ENCODE measurements at regions of chr2 and their contacts with region 1.

Region 1: GRCh38 chr2:8872821-8873432 is 35.5 kb upstream of the KIDINS220 start:
- DNase-seq: peak; percentile 73
- ATAC-seq: peak; percentile 54
- H3K4me3 ChIP-seq: no peak overlapping the region
- H3K27ac ChIP-seq: no peak overlapping the region
- H3K4me1 ChIP-seq: peaks cover 2% of the 10 kb centered on the region; the same call in 1 of the 2 replicates
- H3K27me3 ChIP-seq: no peaks in the 10 kb centered on the region
- CTCF ChIP-seq: peak; percentile 71
- POLR2A ChIP-seq: no peak
- RAD21 ChIP-seq: peak; percentile 74

Region 2: DNA sequence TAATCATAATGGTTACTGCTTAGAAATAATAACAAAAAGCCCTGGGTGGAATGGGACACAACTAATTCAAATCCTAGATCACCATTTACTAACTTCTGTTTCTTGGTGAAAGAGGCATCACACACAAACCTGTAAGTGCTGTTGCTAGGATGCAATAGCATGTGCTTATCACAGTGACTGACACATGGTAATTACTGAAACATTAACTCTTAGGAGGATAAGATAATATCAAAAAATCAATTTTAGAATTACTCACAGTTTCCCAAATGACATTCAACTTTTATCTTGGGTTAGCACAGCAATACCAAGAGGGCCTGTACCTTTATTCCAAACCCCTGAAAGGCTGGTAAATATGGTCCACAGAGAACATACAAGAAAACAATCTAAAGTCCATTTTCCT is 61.4 kb after region 1 on chr2:
- CTCF ChIA-PET with region 1: no interaction called
- POLR2A ChIA-PET with region 1: no interaction called
- dilution Hi-C with region 1: no loop called
- in situ Hi-C with region 1: no loop called
- intact Hi-C with region 1: no loop called
- DNase-seq: no peak
- ATAC-seq: no peak
- H3K4me3 ChIP-seq: no peak overlapping the region
- H3K27ac ChIP-seq: no peak overlapping the region
- H3K4me1 ChIP-seq: 0 out of 2 replicates have a peak, but pooled peaks cover 2% of the 10 kb centered on the region
- H3K27me3 ChIP-seq: no peaks in the 10 kb centered on the region
- CTCF ChIP-seq: no peak
- POLR2A ChIP-seq: no peak
- RAD21 ChIP-seq: no peak

Region 3: DNA sequence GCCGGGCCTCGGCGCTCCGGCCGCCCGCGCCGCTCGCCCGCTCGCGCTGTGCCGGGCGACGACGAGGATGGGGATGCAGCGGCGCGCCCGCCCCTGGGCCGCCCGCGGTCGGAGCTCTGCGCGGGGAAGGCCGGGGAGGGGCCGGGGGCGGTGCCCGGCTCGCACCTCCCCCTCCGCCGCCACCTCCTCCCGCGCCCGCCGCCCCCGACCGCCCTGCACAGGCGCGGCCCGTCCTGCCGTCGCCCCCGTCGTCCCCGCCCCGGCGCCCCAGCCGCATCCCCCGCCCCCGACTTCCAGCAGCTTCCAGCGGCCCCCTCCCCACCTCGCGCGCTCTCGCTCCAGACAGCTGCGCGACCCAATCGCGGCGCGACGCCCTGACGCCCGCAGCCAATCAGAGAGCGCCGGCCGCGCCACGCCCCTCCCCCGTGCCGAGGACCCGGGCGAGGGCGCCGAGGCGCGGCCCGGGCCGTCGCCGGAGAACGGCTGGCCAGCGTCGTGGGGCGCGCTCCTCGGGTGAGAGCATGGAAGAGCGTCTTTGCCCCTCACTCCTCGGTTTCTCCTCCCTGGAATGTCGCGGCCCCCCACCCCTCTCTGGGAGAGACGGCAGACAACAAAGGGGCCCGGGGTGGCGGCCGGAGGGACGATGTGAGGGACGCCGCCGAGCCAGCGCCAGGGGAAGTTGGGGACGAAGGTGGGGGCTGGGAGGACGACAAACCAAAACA is 130.8 kb after region 1 on chr2 and contains the start of gene MBOAT2:
- CTCF ChIA-PET with region 1: no interaction called
- POLR2A ChIA-PET with region 1: no interaction called
- dilution Hi-C with region 1: no loop called
- in situ Hi-C with region 1: no loop called
- intact Hi-C with region 1: loop called (anchors 5 kb)
- DNase-seq: peak; percentile 89
- ATAC-seq: peak; percentile 93
- H3K4me3 ChIP-seq: peak within 1 kb of the TSS; percentile 88
- H3K27ac ChIP-seq: peak within 1 kb of the TSS; percentile 96
- H3K4me1 ChIP-seq: peaks cover 6% of the 10 kb centered on the region
- H3K27me3 ChIP-seq: no peaks in the 10 kb centered on the region
- CTCF ChIP-seq: no peak
- POLR2A ChIP-seq: peak; percentile 86
- RAD21 ChIP-seq: no peak
- total RNA-seq, gene MBOAT2: 91.7 and 102 TPM in 2 replicates

Region 4: GRCh38 chr2:9333591-9334171 is 460.8 kb after region 1 on chr2:
- CTCF ChIA-PET with region 1: no interaction called
- POLR2A ChIA-PET with region 1: no interaction called
- dilution Hi-C with region 1: no loop called
- in situ Hi-C with region 1: loop called (anchors 25 kb)
- intact Hi-C with region 1: no loop called
- DNase-seq: peak; percentile 91
- ATAC-seq: peak; percentile 72
- H3K4me3 ChIP-seq: no peak overlapping the region
- H3K27ac ChIP-seq: no peak overlapping the region
- H3K4me1 ChIP-seq: peaks cover 10% of the 10 kb centered on the region
- H3K27me3 ChIP-seq: no peaks in the 10 kb centered on the region
- CTCF ChIP-seq: peak; percentile 85
- POLR2A ChIP-seq: no peak
- RAD21 ChIP-seq: peak; percentile 89

Measured in IMR-90 (cell line).